Dorsolateral prefrontal cortex (tissue), 120 donors: ENCODE measurements at regions of chr16 and their contacts with region 1.

Region 1: GRCh38 chr16:27718201-27719105 is 168.5 kb downstream of the KATNIP start:
- DNase-seq: peak; percentile 24 to 94 (median 90)
- H3K4me3 ChIP-seq: peak overlapping the region; percentile 0 to 70 (median 53)
- H3K27ac ChIP-seq: peak overlapping the region; percentile 76 to 100 (median 98)
- H3K27me3 ChIP-seq: no peaks in the 10 kb centered on the region
- CTCF ChIP-seq: peak in 4 of 56 donors; percentile 4 to 27 (median 14)

Region 2: DNA sequence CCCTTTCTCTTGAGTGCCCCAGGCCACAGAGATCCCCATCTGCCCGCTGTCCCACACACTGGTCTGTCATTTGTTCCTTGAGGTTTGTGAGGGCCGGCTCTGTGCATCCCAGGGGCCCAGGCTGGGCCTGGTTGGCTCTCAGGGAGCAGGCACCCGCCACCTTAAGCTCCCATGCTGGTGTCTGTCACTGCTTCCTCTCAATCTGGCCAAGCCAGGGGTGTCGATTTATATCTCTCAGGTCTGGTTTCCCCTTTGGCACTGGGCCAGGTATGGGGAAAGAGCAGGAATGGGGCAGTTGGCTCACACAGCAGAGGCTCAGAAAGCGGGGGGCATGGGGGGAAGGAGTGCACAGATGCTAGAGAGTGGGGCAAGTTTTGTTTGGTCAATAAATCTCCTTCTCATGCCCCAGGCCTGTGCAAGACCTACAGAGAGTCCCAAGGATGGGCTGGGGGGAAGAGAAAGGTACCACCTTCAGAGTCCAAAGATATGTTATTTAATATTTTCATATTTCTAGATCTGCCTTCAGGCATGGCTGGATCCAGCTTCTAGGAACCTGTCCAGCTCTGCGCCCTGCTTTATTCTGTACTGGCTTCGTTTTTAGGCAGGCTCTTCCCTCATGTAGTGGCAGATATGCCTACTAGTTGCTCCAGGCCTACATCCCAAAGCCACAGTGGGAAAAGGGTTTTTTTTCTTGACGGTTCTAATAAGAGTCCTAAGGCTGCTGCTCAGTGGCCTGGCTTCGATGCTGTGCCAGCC is 370.3 kb before region 1 on chr16:
- intact Hi-C with region 1: no loop called
- DNase-seq: no peak
- H3K4me3 ChIP-seq: no peak overlapping the region
- H3K27ac ChIP-seq: no peak overlapping the region
- H3K27me3 ChIP-seq: no peaks in the 10 kb centered on the region
- CTCF ChIP-seq: no peak

Region 3: GRCh38 chr16:27748868-27749546 is 30.6 kb after region 1 on chr16:
- intact Hi-C with region 1: no loop called
- DNase-seq: peak in 1 of 10 donors; percentile 52
- H3K4me3 ChIP-seq: no peak overlapping the region
- H3K27ac ChIP-seq: peak overlapping the region in 37 of 59 donors; percentile 8 to 77 (median 55)
- H3K27me3 ChIP-seq: no peaks in the 10 kb centered on the region
- CTCF ChIP-seq: peak in 49 of 56 donors; percentile 21 to 73 (median 46)

Region 4: GRCh38 chr16:27759301-27759871 is 40.9 kb after region 1 on chr16:
- intact Hi-C with region 1: loop called in 1 of 2 experiments (anchors 2 kb)
- DNase-seq: peak in 1 of 10 donors; percentile 32
- H3K4me3 ChIP-seq: no peak overlapping the region
- H3K27ac ChIP-seq: peak overlapping the region in 55 of 59 donors; percentile 3 to 88 (median 61)
- H3K27me3 ChIP-seq: no peaks in the 10 kb centered on the region
- CTCF ChIP-seq: no peak